Calu3 (cell line): ENCODE measurements at regions of chr4 and their contacts with region 1.

Region 1: DNA sequence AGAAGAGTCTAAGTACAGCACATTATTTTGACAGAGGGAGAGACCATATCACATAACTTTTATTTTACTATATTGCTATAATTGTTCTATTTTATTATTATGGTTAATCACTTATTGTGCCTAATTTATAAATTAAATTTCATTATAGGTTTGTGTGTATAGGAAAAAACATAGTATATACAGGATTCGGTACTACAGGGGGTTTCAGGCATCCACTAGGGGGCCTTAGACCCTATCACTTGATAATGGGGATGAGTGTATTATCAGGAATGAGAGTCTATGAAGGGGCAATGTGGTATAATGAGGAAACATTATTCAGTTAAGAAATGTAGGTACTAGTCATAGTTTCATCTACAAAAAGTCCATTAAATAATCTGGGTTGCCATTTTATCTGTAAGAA is 833.1 kb downstream of the C4orf33 start:
- DNase-seq: peak; percentile 3
- H3K4me3 Mint-ChIP-seq: no peak overlapping the region
- H3K27ac Mint-ChIP-seq: no peak overlapping the region
- H3K4me1 Mint-ChIP-seq: no peaks in the 10 kb centered on the region
- H3K27me3 Mint-ChIP-seq: no peaks in the 10 kb centered on the region
- CTCF ChIP-seq: no peak

Region 2: DNA sequence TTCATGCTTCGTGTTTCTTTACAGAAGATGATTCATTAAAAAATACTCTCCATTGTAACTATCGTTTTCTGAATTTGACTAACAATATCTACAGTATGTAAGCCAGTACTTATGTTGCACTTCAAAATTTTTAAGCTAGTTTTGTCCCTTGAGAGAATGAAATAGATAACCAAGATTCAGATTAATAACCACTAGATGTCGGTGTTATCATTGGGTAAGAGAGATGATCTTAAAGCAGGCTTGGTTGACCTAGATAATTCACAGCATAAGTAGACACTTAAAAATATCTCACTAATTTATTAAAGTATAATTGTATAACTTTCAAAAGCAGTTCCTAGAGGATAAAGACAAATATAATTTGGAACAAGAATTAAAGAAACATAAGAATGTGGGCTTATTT is 402.2 kb before region 1 on chr4:
- CTCF ChIA-PET with region 1: no interaction called
- intact Hi-C with region 1: loop called (anchors 10 kb)
- DNase-seq: no peak
- H3K4me3 Mint-ChIP-seq: no peak overlapping the region
- H3K27ac Mint-ChIP-seq: no peak overlapping the region
- H3K4me1 Mint-ChIP-seq: no peaks in the 10 kb centered on the region
- H3K27me3 Mint-ChIP-seq: no peaks in the 10 kb centered on the region
- CTCF ChIP-seq: no peak

Region 3: GRCh38 chr4:129829373-129829772 is 99.7 kb before region 1 on chr4:
- CTCF ChIA-PET with region 1: no interaction called
- intact Hi-C with region 1: no loop called
- DNase-seq: no peak
- H3K4me3 Mint-ChIP-seq: no peak overlapping the region
- H3K27ac Mint-ChIP-seq: no peak overlapping the region
- H3K4me1 Mint-ChIP-seq: no peaks in the 10 kb centered on the region
- H3K27me3 Mint-ChIP-seq: no peaks in the 10 kb centered on the region
- CTCF ChIP-seq: no peak

Region 4: GRCh38 chr4:130336585-130337217 is 407.6 kb after region 1 on chr4:
- CTCF ChIA-PET with region 1: no interaction called
- intact Hi-C with region 1: loop called (anchors 10 kb)
- DNase-seq: peak; percentile 7
- H3K4me3 Mint-ChIP-seq: no peak overlapping the region
- H3K27ac Mint-ChIP-seq: no peak overlapping the region
- H3K4me1 Mint-ChIP-seq: no peaks in the 10 kb centered on the region
- H3K27me3 Mint-ChIP-seq: no peaks in the 10 kb centered on the region
- CTCF ChIP-seq: peak; percentile 41